Panc1 (cell line): ENCODE measurements at regions of chr12 and their contacts with region 1.

Region 1: DNA sequence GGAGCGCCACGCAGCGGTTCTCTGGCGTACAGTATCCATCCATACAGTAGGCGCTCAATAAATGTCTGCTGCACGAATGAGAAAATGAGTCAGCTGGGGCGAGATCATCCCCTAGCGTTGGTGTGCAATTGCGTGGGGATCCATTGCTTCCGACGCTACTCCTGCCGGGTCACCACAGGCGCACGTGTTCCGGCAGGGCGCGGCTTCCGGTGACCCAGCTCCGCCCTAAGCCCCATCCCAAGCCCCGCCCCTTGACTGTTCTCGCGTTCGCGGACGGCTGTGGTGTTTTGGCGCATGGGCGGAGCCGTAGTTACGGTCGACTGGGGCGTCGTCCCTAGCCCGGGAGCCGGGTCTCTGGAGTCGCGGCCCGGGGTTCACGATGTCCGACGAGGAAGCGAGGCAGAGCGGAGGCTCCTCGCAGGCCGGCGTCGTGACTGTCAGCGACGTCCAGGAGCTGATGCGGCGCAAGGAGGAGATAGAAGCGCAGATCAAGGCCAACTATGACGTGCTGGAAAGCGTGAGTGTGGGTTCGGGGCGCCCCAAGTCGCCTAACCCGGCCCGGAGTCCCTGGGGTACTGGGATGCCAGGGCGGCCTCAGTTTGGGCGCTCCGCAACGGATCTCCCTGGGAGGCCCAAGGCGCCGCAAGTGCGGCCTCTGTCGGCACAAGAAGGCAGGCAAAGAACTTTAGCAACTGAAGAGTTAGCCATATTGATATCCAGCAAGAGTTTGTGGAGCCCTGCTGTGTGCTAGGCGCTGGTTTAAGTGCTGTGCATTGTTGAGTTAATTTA is at the start of gene PSMD9:
- DNase-seq: peak; percentile 85
- ATAC-seq: peak; percentile 99
- H3K4me3 ChIP-seq: peak within 1 kb of the TSS; percentile 86 to 91
- H3K27ac ChIP-seq: peak within 1 kb of the TSS; percentile 98
- H3K4me1 ChIP-seq: peaks cover 15% of the 10 kb centered on the region
- H3K27me3 ChIP-seq: no peaks in the 10 kb centered on the region
- CTCF ChIP-seq: peak; percentile 71
- total RNA-seq, gene PSMD9: 62.7 TPM

Region 2: DNA sequence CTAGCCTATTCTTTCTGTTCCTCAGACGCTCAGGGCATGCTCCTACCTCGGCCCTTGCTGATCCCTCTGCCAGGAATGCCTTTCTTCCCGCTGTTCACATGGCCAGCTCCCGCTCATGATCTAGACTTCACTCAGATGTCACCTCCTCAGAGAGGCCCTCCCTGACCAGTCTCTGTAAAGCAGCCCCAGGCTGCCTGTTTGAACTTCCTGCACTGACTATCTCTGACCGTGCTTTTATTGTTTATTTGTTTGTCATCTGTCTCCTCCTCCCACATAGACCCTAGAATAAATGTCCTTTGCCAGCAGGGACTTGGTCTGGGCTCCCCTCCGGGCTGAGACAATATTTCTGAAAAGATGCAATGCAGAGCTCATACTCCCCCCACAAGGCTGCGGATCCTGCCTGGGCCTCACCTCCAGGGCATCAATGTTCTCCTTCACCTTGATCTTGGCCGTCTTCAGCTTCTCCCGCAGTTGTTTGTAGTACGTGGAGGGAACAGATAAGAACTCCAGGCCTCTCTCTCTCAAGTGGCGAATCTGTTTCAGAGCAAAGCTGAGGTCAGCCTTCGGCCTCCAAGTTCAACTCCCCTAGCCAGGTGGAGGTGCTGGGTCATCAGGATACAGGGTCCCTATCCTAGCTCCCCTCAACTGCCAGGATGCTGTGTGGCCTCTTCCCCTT is 45.2 kb before region 1 on chr12:
- CTCF ChIA-PET with region 1: interaction called, 3 read pairs
- POLR2A ChIA-PET with region 1: interaction called, 11 read pairs
- in situ Hi-C with region 1: no loop called
- intact Hi-C with region 1: no loop called
- DNase-seq: no peak
- ATAC-seq: no peak
- H3K4me3 ChIP-seq: no peak overlapping the region
- H3K27ac ChIP-seq: no peak overlapping the region
- H3K4me1 ChIP-seq: peaks cover 8% of the 10 kb centered on the region; the same call in 1 of the 2 replicates
- H3K27me3 ChIP-seq: no peaks in the 10 kb centered on the region
- CTCF ChIP-seq: no peak

Region 3: DNA sequence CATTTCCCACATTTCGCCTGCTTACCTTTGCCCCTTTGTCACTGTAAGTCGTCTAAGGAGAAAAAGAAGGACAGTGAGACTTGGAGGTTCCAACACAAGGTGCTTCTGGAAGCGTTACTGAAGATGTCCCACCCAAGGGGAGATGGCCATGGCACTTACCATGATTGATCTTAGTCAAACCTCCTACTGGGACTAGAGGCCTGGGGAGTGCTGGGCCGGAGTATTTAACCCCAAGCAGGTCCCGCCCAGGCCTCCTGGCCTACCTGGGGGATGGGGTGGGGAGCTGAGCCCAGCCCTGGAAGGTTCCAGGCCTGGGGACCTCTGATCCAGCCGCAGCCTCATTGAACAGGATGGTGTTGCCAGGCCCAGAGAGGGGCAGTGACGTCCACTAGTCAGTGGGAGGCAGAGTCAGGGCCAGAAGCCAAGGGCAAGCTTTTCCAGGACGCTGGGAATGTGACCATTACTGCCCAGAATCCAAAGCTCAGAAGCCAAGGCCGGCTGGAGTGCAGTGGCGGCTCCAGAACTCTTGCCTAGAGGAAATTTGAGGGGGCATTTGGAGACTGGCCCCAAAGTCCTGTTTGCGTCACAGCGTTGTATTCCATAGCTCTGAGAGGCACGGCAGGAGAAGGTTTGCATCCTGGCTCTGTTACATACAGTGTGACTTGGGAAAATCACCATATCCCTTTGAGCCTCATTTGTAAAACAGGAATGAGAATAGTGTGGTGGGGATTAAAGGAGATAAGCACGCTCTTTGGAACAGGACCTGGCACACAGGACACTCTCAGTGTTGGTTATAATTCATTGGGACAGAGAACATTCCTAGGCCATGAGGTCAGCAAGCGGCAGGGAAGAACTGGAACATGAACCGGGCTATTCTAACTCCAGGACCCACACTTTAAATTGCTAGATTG is 29.8 kb before region 1 on chr12 and contains the start of gene HPD:
- CTCF ChIA-PET with region 1: interaction called, 10 read pairs
- POLR2A ChIA-PET with region 1: interaction called, 11 read pairs
- in situ Hi-C with region 1: no loop called
- intact Hi-C with region 1: no loop called
- DNase-seq: no peak
- ATAC-seq: peak; percentile 70
- H3K4me3 ChIP-seq: no peak within 1 kb of the TSS
- H3K27ac ChIP-seq: peak within 1 kb of the TSS; percentile 66
- H3K4me1 ChIP-seq: peaks cover 23% of the 10 kb centered on the region
- H3K27me3 ChIP-seq: no peaks in the 10 kb centered on the region
- CTCF ChIP-seq: no peak
- total RNA-seq, gene HPD: 0.51 TPM